ENCODE measurements at regions of chr2 and their contacts with region 1.

Region 1: GRCh38 chr2:45494269-45494977 is 116.6 kb downstream of the SRBD1 start:
- DNase-seq: peak; percentile 79
- ATAC-seq: peak; percentile 62; the same call in 1 of the 2 replicates
- H3K4me3 ChIP-seq: no peak overlapping the region
- H3K27ac ChIP-seq: no peak overlapping the region
- H3K4me1 ChIP-seq: no peaks in the 10 kb centered on the region; the same call in 1 of the 2 replicates
- H3K27me3 ChIP-seq: no peaks in the 10 kb centered on the region
- CTCF ChIP-seq: peak; percentile 93
- POLR2A ChIP-seq: no peak
- RAD21 ChIP-seq: peak; percentile 89

Region 2: GRCh38 chr2:44987036-44987435 is 507.4 kb before region 1 on chr2:
- CTCF ChIA-PET with region 1: interaction called, 27 read pairs
- POLR2A ChIA-PET with region 1: no interaction called
- dilution Hi-C with region 1: no loop called
- in situ Hi-C with region 1: loop called (anchors 5 kb)
- intact Hi-C with region 1: no loop called
- DNase-seq: no peak
- ATAC-seq: no peak
- H3K4me3 ChIP-seq: no peak overlapping the region
- H3K27ac ChIP-seq: no peak overlapping the region
- H3K4me1 ChIP-seq: no peaks in the 10 kb centered on the region
- H3K27me3 ChIP-seq: peaks cover 18% of the 10 kb centered on the region
- CTCF ChIP-seq: no peak
- POLR2A ChIP-seq: no peak
- RAD21 ChIP-seq: no peak

Region 3: GRCh38 chr2:45382744-45383143 is 111.7 kb before region 1 on chr2:
- CTCF ChIA-PET with region 1: no interaction called
- POLR2A ChIA-PET with region 1: no interaction called
- dilution Hi-C with region 1: no loop called
- in situ Hi-C with region 1: no loop called
- intact Hi-C with region 1: no loop called
- DNase-seq: peak; percentile 65
- ATAC-seq: no peak
- H3K4me3 ChIP-seq: no peak overlapping the region
- H3K27ac ChIP-seq: no peak overlapping the region
- H3K4me1 ChIP-seq: no peaks in the 10 kb centered on the region; the same call in 1 of the 2 replicates
- H3K27me3 ChIP-seq: no peaks in the 10 kb centered on the region
- CTCF ChIP-seq: no peak
- POLR2A ChIP-seq: no peak
- RAD21 ChIP-seq: no peak

Measured in IMR-90 (cell line).